ENCODE measurements at regions of chr16 and their contacts with region 1.

Region 1: DNA sequence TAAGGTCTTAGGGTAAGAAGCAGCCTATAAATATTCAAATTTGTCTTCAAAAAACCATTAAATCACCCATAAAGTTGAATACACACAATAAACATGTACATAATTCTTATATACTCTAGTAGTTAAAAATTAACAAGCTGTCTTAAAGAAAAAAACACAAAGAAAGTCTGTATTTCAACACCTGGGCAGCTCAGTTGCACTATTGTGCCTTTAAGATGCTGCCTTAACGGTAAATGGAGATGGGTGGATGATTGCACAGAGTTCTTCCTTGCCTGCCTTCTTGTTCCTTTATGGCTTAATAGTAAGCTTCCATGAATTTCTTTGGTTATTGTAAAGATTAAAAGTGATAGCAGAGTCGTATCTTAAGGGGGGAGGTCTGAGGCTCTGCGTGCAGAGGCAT is 105.1 kb downstream of the TOX3 start:
- DNase-seq: no peak

Region 2: GRCh38 chr16:52471650-52472370 is 29.9 kb after region 1 on chr16:
- intact Hi-C with region 1: loop called in 1 of 2 experiments (anchors 1 kb)
- DNase-seq: no peak

Region 3: DNA sequence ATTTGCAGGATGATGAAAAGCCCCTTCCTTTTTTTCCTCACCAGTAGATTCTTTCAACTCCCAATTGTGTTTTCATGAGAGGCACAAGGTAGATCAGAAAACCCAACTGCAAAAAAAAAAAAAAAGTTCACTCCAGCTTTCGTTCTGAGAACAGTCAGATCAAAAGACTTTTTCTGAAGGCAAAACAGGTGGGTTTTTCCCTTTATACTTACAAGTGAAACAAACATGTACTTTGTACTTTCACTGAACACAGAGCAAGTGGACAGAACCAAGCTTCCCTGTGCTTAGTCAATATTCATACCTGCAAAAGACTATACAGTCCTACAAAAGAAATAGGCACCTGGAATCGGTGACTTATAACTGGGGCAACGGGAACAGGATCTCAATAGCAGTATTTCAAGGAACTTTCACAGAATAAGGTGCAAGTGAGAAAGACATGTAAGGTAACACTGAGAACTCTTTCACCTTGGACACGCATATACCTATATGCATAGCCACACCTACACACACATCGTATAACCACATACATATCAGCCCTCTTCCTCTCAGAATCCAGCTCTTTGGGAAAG is 51.0 kb after region 1 on chr16:
- intact Hi-C with region 1: no loop called
- DNase-seq: no peak

Measured in posterior vena cava (tissue), 2 donors.